Lower lobe of right lung (tissue), 2 donors: ENCODE measurements at regions of chr6 and their contacts with region 1.

Region 1: DNA sequence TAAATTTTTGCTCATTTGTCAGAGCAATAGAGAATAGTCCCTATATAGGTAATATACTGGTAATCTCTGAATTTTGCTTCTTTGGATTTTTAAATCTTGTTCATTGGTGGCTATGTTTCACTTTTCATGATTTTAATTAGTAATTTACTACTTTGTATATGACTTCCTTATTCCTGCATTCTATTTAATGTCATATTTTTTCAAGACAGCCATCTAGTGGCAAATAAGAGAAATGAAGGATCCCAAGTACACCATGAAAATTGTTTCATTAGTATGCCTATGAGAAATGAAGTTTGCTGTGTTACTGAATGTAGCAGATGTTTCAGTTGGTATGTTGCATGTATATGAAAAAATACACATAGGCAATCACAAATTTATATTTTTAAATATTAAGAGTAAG is 82.4 kb downstream of the ZNF292 start:
- DNase-seq: no peak
- ATAC-seq: peak in 1 of 2 donors; percentile 56
- H3K4me3 ChIP-seq: no peak overlapping the region
- H3K27ac ChIP-seq: no peak overlapping the region
- H3K4me1 ChIP-seq: no peaks in the 10 kb centered on the region
- H3K27me3 ChIP-seq: no peaks in the 10 kb centered on the region
- CTCF ChIP-seq: peak; percentile 63

Region 2: GRCh38 chr6:87139236-87139635 is 98.6 kb before region 1 on chr6:
- intact Hi-C with region 1: loop called (anchors 5 kb)
- DNase-seq: no peak
- ATAC-seq: peak; percentile 80 to 88
- H3K4me3 ChIP-seq: no peak overlapping the region
- H3K27ac ChIP-seq: no peak overlapping the region
- H3K4me1 ChIP-seq: no peaks in the 10 kb centered on the region
- H3K27me3 ChIP-seq: no peaks in the 10 kb centered on the region
- CTCF ChIP-seq: peak; percentile 73

Region 3: GRCh38 chr6:87628881-87629280 is 391.1 kb after region 1 on chr6:
- intact Hi-C with region 1: no loop called
- DNase-seq: no peak
- ATAC-seq: no peak
- H3K4me3 ChIP-seq: no peak overlapping the region
- H3K27ac ChIP-seq: no peak overlapping the region
- H3K4me1 ChIP-seq: no peaks in the 10 kb centered on the region
- H3K27me3 ChIP-seq: no peaks in the 10 kb centered on the region
- CTCF ChIP-seq: no peak